ENCODE measurements at regions of chr19 and their contacts with region 1.

Region 1: GRCh38 chr19:12884926-12885748 is 1.9 kb downstream of the KLF1 start:
- DNase-seq: peak; percentile 90
- ATAC-seq: peak; percentile 20

Region 2: GRCh38 chr19:12867120-12868099 is 17.7 kb before region 1 on chr19:
- intact Hi-C with region 1: no loop called
- DNase-seq: no peak
- ATAC-seq: peak; percentile 71

Region 3: DNA sequence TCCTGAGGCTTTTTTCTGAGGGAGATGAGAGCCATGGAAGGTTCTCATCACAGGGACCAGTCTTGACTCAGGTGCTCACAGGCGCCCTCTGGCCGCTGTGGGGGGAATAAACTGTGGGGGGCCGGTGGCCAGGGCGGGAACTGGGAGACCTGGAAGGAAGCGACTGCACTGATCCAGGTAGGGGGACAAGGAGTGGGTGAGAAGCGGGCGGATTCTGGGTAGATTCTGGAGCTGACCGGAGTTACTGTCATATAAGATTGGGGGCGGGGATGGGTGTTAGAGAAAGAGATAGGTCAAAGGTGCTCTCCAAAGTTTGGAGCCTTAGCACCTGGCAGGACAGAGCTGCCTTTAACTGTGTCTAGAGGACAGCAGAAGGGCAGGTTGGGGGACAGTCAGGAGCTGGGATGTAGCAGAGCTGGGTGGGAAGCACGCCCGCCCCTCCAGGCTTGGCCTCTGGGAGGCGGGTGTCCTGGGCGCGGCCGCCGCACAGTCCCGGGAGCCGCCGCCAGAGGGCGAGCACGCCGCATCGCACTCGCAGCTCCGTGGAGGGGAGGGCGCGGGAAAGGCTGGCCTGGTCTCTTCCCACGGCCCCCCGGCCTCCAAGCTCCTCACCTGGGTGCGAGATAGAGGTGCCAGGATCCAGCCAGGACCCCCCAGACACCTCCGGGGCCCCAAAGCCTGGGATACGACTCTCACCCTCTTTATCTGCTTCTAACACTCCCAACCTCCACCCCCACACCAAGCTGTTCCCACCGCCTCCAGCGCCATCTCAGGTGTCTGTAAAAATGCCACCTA is 80.1 kb after region 1 on chr19:
- intact Hi-C with region 1: loop called (anchors 5 kb)
- DNase-seq: peak; percentile 92
- ATAC-seq: peak; percentile 93